ENCODE measurements at regions of chr13 and their contacts with region 1.

Region 1: GRCh38 chr13:41019011-41019487 is at the start of gene ELF1:
- DNase-seq: peak; percentile 49
- H3K4me3 Mint-ChIP-seq: peak within 1 kb of the TSS; percentile 67
- H3K27ac Mint-ChIP-seq: peak within 1 kb of the TSS; percentile 93
- H3K4me1 Mint-ChIP-seq: no peaks in the 10 kb centered on the region
- H3K27me3 Mint-ChIP-seq: no peaks in the 10 kb centered on the region
- CTCF ChIP-seq: no peak
- total RNA-seq, gene ELF1: 63.4 and 63.5 TPM in 2 replicates

Region 2: GRCh38 chr13:40666905-40667621 is 352.0 kb before region 1 on chr13:
- CTCF ChIA-PET with region 1: no interaction called
- intact Hi-C with region 1: no loop called
- DNase-seq: peak; percentile 11
- H3K4me3 Mint-ChIP-seq: peak overlapping the region; percentile 95
- H3K27ac Mint-ChIP-seq: peak overlapping the region; percentile 87
- H3K4me1 Mint-ChIP-seq: peaks cover 3% of the 10 kb centered on the region
- H3K27me3 Mint-ChIP-seq: no peaks in the 10 kb centered on the region
- CTCF ChIP-seq: no peak

Region 3: DNA sequence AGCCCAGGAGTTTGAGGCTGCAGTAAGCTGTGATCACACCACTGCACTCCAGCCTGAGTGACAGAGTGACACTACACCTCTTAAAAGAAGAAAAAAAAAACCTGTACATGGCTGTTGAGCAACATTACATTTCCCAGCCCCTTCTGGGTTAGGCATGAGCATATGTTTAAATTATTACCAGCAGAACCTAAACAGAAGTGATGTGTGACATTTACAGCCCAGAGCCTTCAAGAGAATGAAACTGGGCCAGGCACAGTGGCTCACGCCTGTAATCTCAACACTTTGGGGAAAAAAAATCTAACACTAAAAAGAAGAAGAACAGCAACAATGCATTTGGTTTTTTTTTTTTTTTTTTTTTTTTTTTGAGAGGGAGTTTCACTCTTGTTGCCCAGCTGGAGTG is 286.4 kb before region 1 on chr13:
- CTCF ChIA-PET with region 1: no interaction called
- intact Hi-C with region 1: no loop called
- DNase-seq: no peak
- H3K4me3 Mint-ChIP-seq: no peak overlapping the region
- H3K27ac Mint-ChIP-seq: no peak overlapping the region
- H3K4me1 Mint-ChIP-seq: no peaks in the 10 kb centered on the region
- H3K27me3 Mint-ChIP-seq: no peaks in the 10 kb centered on the region
- CTCF ChIP-seq: no peak

Region 4: DNA sequence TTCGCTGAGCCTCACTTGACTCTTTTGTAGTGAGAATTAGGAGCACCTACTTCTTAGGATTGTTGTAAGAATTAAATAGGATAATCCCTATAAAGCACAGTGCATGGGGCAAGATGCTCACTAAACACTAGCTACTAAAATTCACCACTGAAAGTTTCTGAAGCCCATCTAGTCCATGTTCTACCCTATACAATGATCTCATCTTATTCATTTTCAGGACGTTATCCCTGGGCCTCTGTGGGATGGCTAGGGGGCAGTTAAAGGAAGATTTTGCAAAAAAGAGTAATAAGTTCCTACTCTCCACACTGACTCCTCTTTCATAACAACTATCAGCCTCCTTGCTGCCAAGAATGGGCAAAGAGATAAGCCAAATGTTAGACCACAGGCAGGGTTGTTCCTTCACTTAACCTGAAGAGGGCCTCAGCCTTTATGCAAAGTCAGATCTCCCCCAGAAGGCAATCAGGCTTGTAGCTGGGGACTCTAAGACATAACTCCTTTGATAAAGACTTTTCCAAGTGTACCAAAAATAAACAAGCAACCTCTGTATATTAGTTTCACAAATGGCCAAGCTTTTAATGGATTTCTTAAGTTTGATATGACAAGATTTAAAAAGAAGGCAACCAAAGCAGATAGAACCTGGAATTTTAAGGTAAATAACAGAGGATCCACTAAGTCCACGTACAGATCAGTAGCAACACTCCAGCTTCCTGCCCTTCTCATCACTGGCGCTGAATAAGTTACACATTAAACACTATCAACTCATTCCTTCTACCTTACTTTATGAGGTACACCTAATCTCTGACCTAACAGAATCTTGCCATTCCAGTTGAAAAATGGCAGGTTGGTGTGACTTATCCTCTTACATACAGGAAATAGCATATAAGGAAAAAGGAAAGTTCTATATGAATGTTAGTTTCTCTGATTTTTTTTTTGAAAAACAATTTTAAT is 44.3 kb before region 1 on chr13:
- CTCF ChIA-PET with region 1: interaction called, 9 read pairs
- intact Hi-C with region 1: loop called (anchors 5 kb)
- DNase-seq: peak; percentile 30
- H3K4me3 Mint-ChIP-seq: peak overlapping the region; percentile 30
- H3K27ac Mint-ChIP-seq: peak overlapping the region; percentile 66
- H3K4me1 Mint-ChIP-seq: peaks cover 46% of the 10 kb centered on the region
- H3K27me3 Mint-ChIP-seq: no peaks in the 10 kb centered on the region
- CTCF ChIP-seq: peak; percentile 41

Region 5: DNA sequence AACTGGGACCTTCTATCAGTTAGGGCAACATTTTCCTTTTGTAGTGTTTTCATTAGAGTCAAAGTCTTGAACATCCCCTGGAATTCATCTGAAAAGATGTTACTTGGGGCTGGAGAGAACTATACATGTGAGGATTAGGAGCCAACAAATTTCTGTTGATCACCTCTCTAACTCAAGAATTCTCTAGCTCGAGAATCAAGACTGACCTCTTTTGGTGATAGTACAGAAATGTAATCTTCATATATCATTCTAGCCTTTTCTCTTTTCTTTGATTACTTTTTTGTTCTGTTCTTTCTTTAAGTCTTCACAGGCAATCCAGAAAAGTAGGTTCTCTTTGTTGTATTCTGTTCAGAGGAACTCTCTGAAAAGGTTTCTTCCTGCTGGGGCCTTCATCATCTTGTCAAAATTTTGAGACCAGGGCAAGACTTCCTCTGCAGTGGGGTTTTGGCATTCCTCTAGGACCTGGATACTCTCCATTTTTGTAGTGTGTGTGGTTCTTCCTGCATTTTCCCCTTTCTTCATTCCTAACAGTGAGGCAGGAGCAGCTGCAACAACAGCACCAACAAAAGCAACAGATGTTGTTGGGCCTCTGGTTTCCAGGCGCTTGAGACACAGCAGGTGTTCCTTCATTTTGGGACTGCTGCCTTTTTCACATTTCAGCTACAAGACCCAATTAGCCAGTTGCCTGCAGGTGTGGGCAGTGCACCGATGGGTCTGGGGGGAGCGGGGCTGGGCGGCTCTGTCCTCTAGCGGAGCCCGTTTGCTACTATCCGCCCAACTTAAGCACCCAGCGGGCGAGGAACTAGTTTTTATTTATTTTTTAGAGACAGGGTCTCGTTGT is 26.2 kb before region 1 on chr13:
- CTCF ChIA-PET with region 1: no interaction called
- intact Hi-C with region 1: loop called (anchors 2 kb)
- DNase-seq: no peak
- H3K4me3 Mint-ChIP-seq: peak overlapping the region; percentile 52
- H3K27ac Mint-ChIP-seq: peak overlapping the region; percentile 56
- H3K4me1 Mint-ChIP-seq: peaks cover 34% of the 10 kb centered on the region
- H3K27me3 Mint-ChIP-seq: no peaks in the 10 kb centered on the region
- CTCF ChIP-seq: no peak

Measured in Calu3 (cell line).